Motor neuron (in vitro differentiated cells): ENCODE measurements at regions of chr7 and their contacts with region 1.

Region 1: GRCh38 chr7:27235387-27236311 is 7.0 kb upstream of the EVX1 start:
- ATAC-seq: peak; percentile 52 to 93 (median 87)
- H3K4me3 ChIP-seq: peak overlapping the region; percentile 33 to 47 (median 40)
- H3K27ac ChIP-seq: no peak overlapping the region
- H3K4me1 ChIP-seq: peaks cover 7 to 10% of the 10 kb centered on the region in 2 donors

Region 2: DNA sequence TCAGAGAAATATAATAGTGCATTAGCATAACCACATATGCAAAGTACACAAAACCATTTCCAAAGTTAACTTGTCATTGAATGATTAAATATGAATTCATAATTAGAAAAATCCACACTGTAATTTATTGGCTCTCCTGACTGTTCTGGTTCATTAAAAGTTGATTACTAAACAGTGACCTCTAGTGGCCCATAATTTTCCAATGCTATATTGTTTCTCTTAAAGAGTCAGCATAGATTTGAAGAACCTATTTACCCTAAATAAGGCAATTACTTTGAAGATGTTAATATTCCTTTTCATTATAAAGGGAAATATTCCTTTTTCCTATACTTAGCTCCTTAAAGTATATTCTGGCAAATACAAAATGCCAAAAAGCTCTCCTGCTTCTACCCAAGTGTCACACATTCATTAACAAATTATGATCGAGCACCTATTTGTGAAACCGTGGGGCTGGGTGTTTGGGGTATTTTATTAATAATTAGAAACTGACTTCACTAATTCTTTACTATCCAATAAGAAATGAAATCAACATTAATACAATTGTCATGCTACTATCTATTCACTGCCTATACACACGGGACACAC is 340.8 kb after region 1 on chr7:
- in situ Hi-C with region 1: loop called in 4 of 9 experiments (anchors 10 to 25 kb)
- ATAC-seq: peak in 3 of 8 experiments; percentile 65 to 78 (median 65)
- H3K4me3 ChIP-seq: no peak overlapping the region
- H3K27ac ChIP-seq: no peak overlapping the region
- H3K4me1 ChIP-seq: peaks cover 5 to 8% of the 10 kb centered on the region in 2 donors

Region 3: DNA sequence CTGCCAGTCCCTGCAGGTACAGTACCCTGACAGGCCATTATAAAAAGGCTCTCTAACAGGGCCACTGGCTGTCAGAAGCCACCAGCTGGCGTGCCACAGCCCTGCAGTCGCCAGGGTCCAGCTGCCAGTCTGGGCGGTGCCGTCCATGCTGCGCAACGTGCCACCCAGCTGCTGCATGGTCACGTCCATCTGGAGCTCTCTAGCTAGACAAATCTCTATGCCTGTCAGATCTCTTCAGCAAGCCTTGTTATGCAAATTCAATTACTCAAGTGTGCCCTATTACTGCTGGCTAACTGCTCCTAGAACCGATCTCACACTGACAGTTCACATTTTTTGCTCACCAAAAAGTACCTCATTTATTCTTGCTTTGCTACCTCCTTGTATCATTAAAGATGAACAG is 351.2 kb after region 1 on chr7:
- in situ Hi-C with region 1: loop called in 4 of 9 experiments (anchors 10 to 25 kb)
- ATAC-seq: peak in 7 of 8 experiments; percentile 33 to 99 (median 90)
- H3K4me3 ChIP-seq: no peak overlapping the region
- H3K27ac ChIP-seq: no peak overlapping the region
- H3K4me1 ChIP-seq: peaks cover 6 to 10% of the 10 kb centered on the region in 2 donors